ENCODE measurements at regions of chr6 and their contacts with region 1.

Region 1: DNA sequence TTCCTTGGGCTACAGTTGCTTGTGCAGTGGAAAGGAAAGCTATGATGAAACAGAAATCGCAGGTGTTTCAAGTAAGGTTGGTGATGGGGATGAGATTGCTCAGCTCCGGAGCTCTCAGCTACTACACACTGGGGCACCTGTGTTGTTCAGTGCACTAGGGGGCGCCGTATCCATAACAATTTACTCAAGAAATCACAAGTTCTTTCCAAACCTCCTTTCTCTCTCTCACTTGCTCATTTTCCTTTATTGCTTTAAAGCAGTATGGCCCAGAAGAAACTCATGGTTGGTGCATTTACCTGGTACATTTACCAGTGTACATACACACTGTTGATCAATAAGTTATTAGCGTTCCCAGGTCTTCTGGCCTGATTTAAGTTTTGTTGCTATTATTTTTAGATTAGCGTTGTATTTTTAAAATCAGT is 235.2 kb upstream of the TAB2 start:
- DNase-seq: peak; percentile 70 to 90 (median 84)
- ATAC-seq: peak; percentile 91
- H3K4me3 ChIP-seq: no peak overlapping the region
- H3K4me3 Mint-ChIP-seq: no peak overlapping the region
- H3K27ac ChIP-seq: no peak overlapping the region
- H3K27ac Mint-ChIP-seq: peak overlapping the region; percentile 49
- H3K4me1 ChIP-seq: peaks cover 21% of the 10 kb centered on the region
- H3K4me1 Mint-ChIP-seq: peaks cover 30% of the 10 kb centered on the region
- H3K27me3 ChIP-seq: no peaks in the 10 kb centered on the region
- H3K27me3 Mint-ChIP-seq: no peaks in the 10 kb centered on the region
- CTCF ChIP-seq: peak; percentile 87

Region 2: GRCh38 chr6:149065658-149066556 is 16.4 kb before region 1 on chr6:
- CTCF ChIA-PET with region 1: interaction called, 10 read pairs
- POLR2A ChIA-PET with region 1: interaction called, 5 read pairs
- intact Hi-C with region 1: no loop called
- DNase-seq: peak in 8 of 9 experiments; percentile 11 to 90 (median 54)
- ATAC-seq: peak; percentile 96
- H3K4me3 ChIP-seq: peak overlapping the region in 1 of 2 experiments; percentile 5
- H3K4me3 Mint-ChIP-seq: peak overlapping the region; percentile 44
- H3K27ac ChIP-seq: peak overlapping the region; percentile 51 to 62
- H3K27ac Mint-ChIP-seq: peak overlapping the region; percentile 96
- H3K4me1 ChIP-seq: peaks cover 24% of the 10 kb centered on the region
- H3K4me1 Mint-ChIP-seq: peaks cover 27% of the 10 kb centered on the region
- H3K27me3 ChIP-seq: no peaks in the 10 kb centered on the region
- H3K27me3 Mint-ChIP-seq: no peaks in the 10 kb centered on the region
- CTCF ChIP-seq: no peak

Region 3: DNA sequence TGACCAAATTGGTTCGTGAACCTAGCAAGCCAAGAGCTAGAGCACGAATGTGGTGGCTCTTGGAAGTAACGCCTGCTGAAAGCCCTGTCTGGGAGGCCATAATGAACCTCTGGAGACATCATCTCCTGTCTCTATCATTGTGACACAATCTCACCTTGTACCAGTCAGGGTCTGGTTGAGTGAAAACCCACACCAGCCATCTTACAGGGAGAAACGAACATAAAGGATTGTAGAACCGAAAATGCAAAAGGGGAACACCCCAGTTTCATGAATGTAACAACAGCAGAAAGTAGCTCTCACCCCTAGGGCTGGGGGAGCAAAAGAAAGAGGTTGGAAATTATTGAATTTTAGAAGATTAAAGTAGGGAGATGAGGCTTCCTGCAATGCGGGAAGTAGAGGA is 184.4 kb after region 1 on chr6:
- CTCF ChIA-PET with region 1: interaction called, 3 read pairs
- POLR2A ChIA-PET with region 1: no interaction called
- intact Hi-C with region 1: loop called in 1 of 2 experiments (anchors 10 kb)
- DNase-seq: no peak
- ATAC-seq: no peak
- H3K4me3 ChIP-seq: no peak overlapping the region
- H3K4me3 Mint-ChIP-seq: no peak overlapping the region
- H3K27ac ChIP-seq: no peak overlapping the region
- H3K27ac Mint-ChIP-seq: no peak overlapping the region
- H3K4me1 ChIP-seq: peaks cover 49% of the 10 kb centered on the region
- H3K4me1 Mint-ChIP-seq: peaks cover 47% of the 10 kb centered on the region
- H3K27me3 ChIP-seq: no peaks in the 10 kb centered on the region
- H3K27me3 Mint-ChIP-seq: no peaks in the 10 kb centered on the region
- CTCF ChIP-seq: no peak

Region 4: GRCh38 chr6:149324428-149324827 is 242.1 kb after region 1 on chr6:
- CTCF ChIA-PET with region 1: interaction called, 4 read pairs
- POLR2A ChIA-PET with region 1: no interaction called
- intact Hi-C with region 1: loop called (anchors 2 to 5 kb)
- DNase-seq: no peak
- ATAC-seq: no peak
- H3K4me3 ChIP-seq: no peak overlapping the region
- H3K4me3 Mint-ChIP-seq: peak overlapping the region; percentile 33
- H3K27ac ChIP-seq: no peak overlapping the region
- H3K27ac Mint-ChIP-seq: no peak overlapping the region
- H3K4me1 ChIP-seq: peaks cover 78% of the 10 kb centered on the region
- H3K4me1 Mint-ChIP-seq: peaks cover 79% of the 10 kb centered on the region
- H3K27me3 ChIP-seq: no peaks in the 10 kb centered on the region
- H3K27me3 Mint-ChIP-seq: no peaks in the 10 kb centered on the region
- CTCF ChIP-seq: no peak

Region 5: DNA sequence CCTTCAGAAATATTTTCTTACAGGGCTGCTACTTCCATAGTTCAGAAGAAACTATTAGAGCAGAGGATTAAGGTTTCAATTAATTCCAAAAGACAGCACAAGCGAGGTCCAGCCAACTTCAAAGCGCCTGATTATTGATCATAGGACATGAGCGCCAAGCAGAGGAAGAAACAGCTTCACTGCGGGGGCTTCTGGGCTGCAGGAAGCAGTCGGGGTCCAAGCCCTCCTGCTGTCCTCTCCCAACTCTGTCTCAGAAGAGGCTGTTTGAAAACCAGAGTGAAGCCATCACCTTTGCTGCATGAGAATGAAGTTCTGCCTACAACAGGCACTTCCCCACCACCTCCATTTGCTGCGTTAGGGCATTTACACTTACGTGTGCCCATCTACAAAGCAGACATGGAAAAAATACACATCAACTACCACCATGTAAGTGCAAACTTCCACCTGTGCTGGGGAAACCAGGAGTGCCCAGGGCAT is 341.7 kb after region 1 on chr6:
- CTCF ChIA-PET with region 1: interaction called, 19 read pairs
- POLR2A ChIA-PET with region 1: no interaction called
- intact Hi-C with region 1: no loop called
- DNase-seq: no peak
- ATAC-seq: no peak
- H3K4me3 ChIP-seq: no peak overlapping the region
- H3K4me3 Mint-ChIP-seq: no peak overlapping the region
- H3K27ac ChIP-seq: no peak overlapping the region
- H3K27ac Mint-ChIP-seq: no peak overlapping the region
- H3K4me1 ChIP-seq: no peaks in the 10 kb centered on the region
- H3K4me1 Mint-ChIP-seq: no peaks in the 10 kb centered on the region
- H3K27me3 ChIP-seq: peaks cover 0 to 2% of the 10 kb centered on the region in 2 experiments
- H3K27me3 Mint-ChIP-seq: no peaks in the 10 kb centered on the region
- CTCF ChIP-seq: no peak

Region 6: DNA sequence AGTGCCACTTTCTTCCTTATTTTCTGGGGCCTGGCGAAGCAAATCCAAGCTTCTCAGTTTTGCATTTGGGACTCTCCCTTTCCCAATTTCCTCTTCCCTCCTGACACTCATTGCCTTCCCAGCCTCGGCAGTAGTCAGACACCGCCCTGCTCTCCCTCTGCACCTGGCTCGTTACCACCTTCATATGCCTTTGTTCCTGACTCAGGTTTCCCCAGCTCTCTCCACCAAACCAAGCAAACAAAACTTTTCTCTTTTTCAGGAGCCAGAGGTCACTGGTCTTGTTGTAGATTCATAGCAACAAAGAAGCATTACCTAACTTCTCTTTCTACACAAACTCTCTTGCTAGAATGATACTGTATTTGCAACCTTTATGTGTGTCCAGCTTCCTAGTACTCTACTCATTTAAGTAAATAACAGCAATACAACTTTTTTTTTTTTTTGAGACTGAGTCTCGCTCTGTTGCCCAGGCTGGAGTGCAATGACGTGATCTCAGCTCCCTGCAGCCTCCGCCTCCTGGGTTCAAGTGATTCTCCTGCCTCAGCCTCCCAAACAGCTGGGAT is 411.5 kb after region 1 on chr6:
- CTCF ChIA-PET with region 1: no interaction called
- POLR2A ChIA-PET with region 1: no interaction called
- intact Hi-C with region 1: no loop called
- DNase-seq: no peak
- ATAC-seq: no peak
- H3K4me3 ChIP-seq: no peak overlapping the region
- H3K4me3 Mint-ChIP-seq: no peak overlapping the region
- H3K27ac ChIP-seq: no peak overlapping the region
- H3K27ac Mint-ChIP-seq: peak overlapping the region; percentile 8
- H3K4me1 ChIP-seq: peaks cover 39% of the 10 kb centered on the region
- H3K4me1 Mint-ChIP-seq: peaks cover 57% of the 10 kb centered on the region
- H3K27me3 ChIP-seq: no peaks in the 10 kb centered on the region
- H3K27me3 Mint-ChIP-seq: no peaks in the 10 kb centered on the region
- CTCF ChIP-seq: no peak

Region 7: GRCh38 chr6:149513915-149514314 is 431.6 kb after region 1 on chr6:
- CTCF ChIA-PET with region 1: interaction called, 14 read pairs
- POLR2A ChIA-PET with region 1: no interaction called
- intact Hi-C with region 1: loop called (anchors 1 kb)
- DNase-seq: no peak
- ATAC-seq: no peak
- H3K4me3 ChIP-seq: no peak overlapping the region
- H3K4me3 Mint-ChIP-seq: no peak overlapping the region
- H3K27ac ChIP-seq: no peak overlapping the region
- H3K27ac Mint-ChIP-seq: no peak overlapping the region
- H3K4me1 ChIP-seq: peaks cover 13% of the 10 kb centered on the region
- H3K4me1 Mint-ChIP-seq: peaks cover 29% of the 10 kb centered on the region
- H3K27me3 ChIP-seq: no peaks in the 10 kb centered on the region
- H3K27me3 Mint-ChIP-seq: no peaks in the 10 kb centered on the region
- CTCF ChIP-seq: no peak